ENCODE measurements at regions of chr19 and their contacts with region 1.

Region 1: DNA sequence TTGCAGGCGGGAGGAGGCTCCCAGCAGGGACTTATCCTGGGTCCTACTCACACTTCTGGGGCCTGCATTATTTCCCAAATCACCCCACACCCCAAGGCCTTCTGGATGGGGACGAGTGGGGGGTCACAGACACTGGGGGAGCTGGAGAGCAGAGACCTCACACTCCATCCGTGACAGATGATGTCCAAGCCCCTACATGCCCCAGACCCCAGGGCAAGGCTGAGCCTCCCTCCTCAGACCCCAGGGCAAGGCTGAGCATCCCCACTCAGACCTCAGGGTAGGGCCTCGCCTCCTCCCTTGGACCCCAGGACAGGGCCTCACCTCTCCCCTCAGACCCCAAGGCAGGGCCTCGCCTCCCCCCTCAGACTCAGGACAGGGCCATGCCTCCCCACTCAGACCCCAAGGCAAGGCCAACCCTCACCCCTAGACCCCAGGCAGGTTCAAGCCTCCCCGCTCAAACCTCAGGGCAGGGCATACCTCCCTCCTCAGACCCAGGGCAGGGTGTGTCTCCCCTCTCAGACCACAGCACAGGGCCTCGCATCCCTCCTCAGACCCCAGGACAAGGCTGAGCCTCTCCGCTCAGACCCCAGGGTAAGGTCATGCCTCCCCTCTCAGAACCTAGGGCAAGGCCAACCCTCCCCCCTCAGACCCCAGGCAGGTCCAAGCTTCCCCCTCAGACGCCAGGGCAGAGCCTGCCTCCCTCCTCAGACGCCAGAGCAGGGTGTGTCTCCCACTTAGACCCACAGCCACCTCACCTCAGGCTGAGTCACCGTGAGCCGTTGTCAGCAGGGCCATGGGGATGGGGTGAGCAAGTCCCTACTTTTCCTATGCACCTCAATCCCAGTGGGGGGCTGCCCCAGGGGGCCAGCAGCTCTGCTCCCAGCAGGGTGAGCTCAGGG is 1.7 kb upstream of the S1PR4 start:
- DNase-seq: peak in 2 of 9 donors; percentile 50 to 65
- ATAC-seq: peak; percentile 66
- H3K4me3 ChIP-seq: peak overlapping the region; percentile 58
- H3K4me3 Mint-ChIP-seq: peak overlapping the region; percentile 74 to 95 (median 84)
- H3K27ac ChIP-seq: peak overlapping the region; percentile 61
- H3K27ac Mint-ChIP-seq: peak overlapping the region; percentile 86 to 99 (median 93)
- H3K4me1 ChIP-seq: peaks cover 22 to 23% of the 10 kb centered on the region in 2 donors
- H3K4me1 Mint-ChIP-seq: peaks cover 5 to 26% (median 21%) of the 10 kb centered on the region in 7 donors
- H3K27me3 ChIP-seq: no peaks in the 10 kb centered on the region
- H3K27me3 Mint-ChIP-seq: no peaks in the 10 kb centered on the region

Region 2: GRCh38 chr19:3125900-3126524 is 50.8 kb before region 1 on chr19:
- CTCF ChIA-PET with region 1: no interaction called
- POLR2A ChIA-PET with region 1: interaction called, 4 read pairs
- intact Hi-C with region 1: loop called in 1 of 2 experiments (anchors 1 kb)
- DNase-seq: peak in 8 of 9 donors; percentile 32 to 74 (median 64)
- ATAC-seq: peak; percentile 92
- H3K4me3 ChIP-seq: no peak overlapping the region
- H3K4me3 Mint-ChIP-seq: no peak overlapping the region
- H3K27ac ChIP-seq: no peak overlapping the region
- H3K27ac Mint-ChIP-seq: no peak overlapping the region
- H3K4me1 ChIP-seq: no peaks in the 10 kb centered on the region
- H3K4me1 Mint-ChIP-seq: peaks cover 0 to 21% (median 5%) of the 10 kb centered on the region in 7 donors
- H3K27me3 ChIP-seq: no peaks in the 10 kb centered on the region
- H3K27me3 Mint-ChIP-seq: peaks cover 0 to 6% (median 2%) of the 10 kb centered on the region in 5 donors

Region 3: GRCh38 chr19:3132971-3133792 is 43.7 kb before region 1 on chr19:
- CTCF ChIA-PET with region 1: no interaction called
- POLR2A ChIA-PET with region 1: interaction called, 4 read pairs
- intact Hi-C with region 1: loop called (anchors 1 to 2 kb)
- DNase-seq: peak; percentile 41 to 81 (median 51)
- ATAC-seq: peak; percentile 93
- H3K4me3 ChIP-seq: peak overlapping the region; percentile 13
- H3K4me3 Mint-ChIP-seq: peak overlapping the region; percentile 47 to 87 (median 70)
- H3K27ac ChIP-seq: peak overlapping the region; percentile 45
- H3K27ac Mint-ChIP-seq: peak overlapping the region in 6 of 9 donors; percentile 58 to 97 (median 68)
- H3K4me1 ChIP-seq: peaks cover 8 to 11% of the 10 kb centered on the region in 2 donors
- H3K4me1 Mint-ChIP-seq: peaks cover 7 to 53% (median 22%) of the 10 kb centered on the region in 7 donors
- H3K27me3 ChIP-seq: peaks cover 0 to 6% of the 10 kb centered on the region in 2 donors
- H3K27me3 Mint-ChIP-seq: peaks cover 0 to 23% (median 0%) of the 10 kb centered on the region in 5 donors

Region 4: DNA sequence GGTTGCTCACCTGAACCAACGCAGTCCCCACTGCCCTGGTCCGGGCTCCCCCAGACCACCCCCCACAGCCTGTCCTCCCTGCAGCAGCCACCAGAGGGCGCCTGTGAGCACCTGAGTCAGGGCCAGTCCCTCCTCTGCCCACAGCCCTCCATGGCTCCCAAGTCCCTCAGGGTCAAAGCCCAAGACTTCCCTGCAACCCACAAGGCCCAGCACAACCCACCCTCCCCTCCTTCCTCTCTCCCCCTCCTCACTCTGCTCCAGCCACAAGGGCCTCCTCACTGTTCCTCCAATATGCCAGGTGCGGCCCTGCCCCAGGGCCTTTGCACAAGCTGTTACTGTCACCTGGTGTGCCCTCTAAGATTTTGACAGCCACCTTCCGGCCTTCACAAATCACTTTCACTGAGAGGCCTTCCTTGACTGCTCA is 30.2 kb before region 1 on chr19:
- CTCF ChIA-PET with region 1: interaction called, 17 read pairs
- POLR2A ChIA-PET with region 1: interaction called, 3 read pairs
- intact Hi-C with region 1: loop called in 1 of 2 experiments (anchors 1 kb)
- DNase-seq: peak; percentile 32 to 81 (median 59)
- ATAC-seq: peak; percentile 63
- H3K4me3 ChIP-seq: no peak overlapping the region
- H3K4me3 Mint-ChIP-seq: peak overlapping the region in 1 of 10 donors; percentile 56
- H3K27ac ChIP-seq: no peak overlapping the region
- H3K27ac Mint-ChIP-seq: peak overlapping the region in 4 of 9 donors; percentile 21 to 78 (median 56)
- H3K4me1 ChIP-seq: no peaks in the 10 kb centered on the region
- H3K4me1 Mint-ChIP-seq: peaks cover 0 to 41% (median 0%) of the 10 kb centered on the region in 7 donors
- H3K27me3 ChIP-seq: no peaks in the 10 kb centered on the region
- H3K27me3 Mint-ChIP-seq: no peaks in the 10 kb centered on the region

Region 5: DNA sequence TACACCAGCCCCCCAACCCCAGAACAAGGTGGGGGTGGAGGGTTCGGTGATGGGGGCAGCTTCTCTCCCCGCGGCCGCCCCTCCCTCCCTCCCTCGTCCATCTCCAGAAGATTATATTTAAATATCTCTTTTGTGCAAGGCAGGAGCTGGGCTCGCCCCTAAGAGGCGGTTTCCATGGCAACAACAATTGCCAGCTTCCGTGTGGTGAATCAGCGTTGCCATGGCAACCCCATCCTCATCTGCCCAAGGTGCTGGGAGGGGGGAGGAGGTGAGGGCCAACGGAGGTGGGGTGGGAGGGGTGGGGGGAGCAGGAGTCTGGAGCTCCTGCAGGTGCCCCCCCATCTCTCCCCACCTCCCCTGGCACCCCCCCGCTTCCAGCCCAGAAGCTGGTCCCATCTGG is 94.0 kb after region 1 on chr19:
- CTCF ChIA-PET with region 1: no interaction called
- POLR2A ChIA-PET with region 1: no interaction called
- intact Hi-C with region 1: no loop called
- DNase-seq: peak in 5 of 9 donors; percentile 29 to 63 (median 33)
- ATAC-seq: no peak
- H3K4me3 ChIP-seq: no peak overlapping the region
- H3K4me3 Mint-ChIP-seq: no peak overlapping the region
- H3K27ac ChIP-seq: no peak overlapping the region
- H3K27ac Mint-ChIP-seq: no peak overlapping the region
- H3K4me1 ChIP-seq: peaks cover 8 to 12% of the 10 kb centered on the region in 2 donors
- H3K4me1 Mint-ChIP-seq: peaks cover 8 to 14% (median 10%) of the 10 kb centered on the region in 7 donors
- H3K27me3 ChIP-seq: peaks cover 0 to 6% of the 10 kb centered on the region in 2 donors
- H3K27me3 Mint-ChIP-seq: peaks cover 32 to 43% (median 35%) of the 10 kb centered on the region in 5 donors

Measured in naive thymus-derived CD4-positive, alpha-beta T cell (primary cell).